ENCODE measurements at regions of chr19 and their contacts with region 1.

Region 1: DNA sequence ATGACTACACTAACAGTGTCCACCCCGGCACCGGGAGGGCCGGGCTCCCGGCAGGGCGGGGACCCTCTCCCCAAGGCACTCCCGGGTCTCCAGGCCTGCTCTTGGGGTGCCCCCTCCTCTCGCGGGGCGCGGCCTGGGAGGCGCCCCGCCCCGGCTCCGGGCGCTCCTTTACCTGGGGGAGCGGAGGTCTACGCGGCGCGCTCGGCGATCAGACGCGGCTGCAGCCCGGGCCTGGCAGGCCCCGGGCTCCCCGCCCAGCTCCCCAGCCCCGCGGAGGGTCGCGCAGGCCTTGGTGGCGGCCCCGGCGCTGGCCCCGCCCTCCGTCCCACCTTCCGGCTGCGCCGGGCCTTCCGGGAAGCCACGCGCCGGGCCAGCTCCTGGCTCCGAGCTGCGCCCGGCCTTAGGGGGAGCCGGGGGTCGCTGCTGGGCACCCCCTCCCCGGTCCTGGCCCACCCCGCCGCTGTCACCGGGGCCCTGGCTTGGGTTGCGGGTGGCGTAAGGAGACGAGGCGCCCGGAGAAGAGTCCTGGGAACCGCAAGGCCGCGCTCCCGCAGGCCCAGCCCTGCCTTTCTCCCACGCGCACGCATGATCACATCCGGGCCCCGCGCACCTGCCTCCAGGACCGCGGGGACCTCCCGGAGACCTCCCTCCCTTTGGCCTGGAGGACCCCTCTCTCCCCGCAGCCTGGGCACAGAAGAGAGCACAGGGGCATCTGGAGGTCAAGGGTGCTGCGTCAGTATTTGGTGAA is at the start of gene C19orf12:
- DNase-seq: peak; percentile 63 to 88 (median 88)
- ATAC-seq: peak; percentile 86 to 89
- H3K4me3 ChIP-seq: peak within 1 kb of the TSS; percentile 98
- H3K27ac ChIP-seq: peak within 1 kb of the TSS; percentile 85
- H3K4me1 ChIP-seq: peaks cover 3% of the 10 kb centered on the region
- H3K27me3 ChIP-seq: no peaks in the 10 kb centered on the region
- total RNA-seq, gene C19orf12: 40.6 to 48.2 (median 43.5) TPM

Region 2: DNA sequence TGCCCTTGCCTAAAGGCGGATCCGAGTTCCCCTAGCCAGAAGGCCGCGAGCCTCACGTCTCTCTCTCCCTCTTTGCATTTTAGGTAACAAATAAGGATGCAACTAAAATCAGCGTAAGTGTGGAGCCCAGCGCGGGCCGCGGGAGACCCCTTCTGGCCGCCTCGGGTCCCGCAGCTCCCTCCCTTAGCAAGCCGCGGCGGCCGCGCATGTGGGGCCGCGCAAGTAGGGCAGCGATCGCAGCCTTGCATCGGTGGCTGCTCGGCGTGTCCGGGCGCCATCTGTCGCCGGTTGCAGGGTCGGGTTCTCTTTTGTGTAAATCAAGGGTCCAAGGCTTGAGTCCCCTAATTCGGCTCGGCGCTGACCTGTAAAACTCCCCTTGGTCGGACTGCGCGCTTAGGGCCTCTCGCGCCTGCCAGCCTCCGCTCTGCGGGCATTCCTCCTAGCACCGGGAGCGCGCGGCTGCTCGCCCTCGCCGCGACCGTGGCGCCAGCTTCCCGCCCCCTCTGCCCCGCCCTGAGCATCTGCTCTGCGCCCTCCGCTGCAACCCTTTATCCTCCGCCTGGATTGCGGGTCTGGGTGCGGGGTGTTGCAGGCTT is 186.7 kb before region 1 on chr19:
- intact Hi-C with region 1: no loop called
- DNase-seq: peak; percentile 56 to 87 (median 81)
- ATAC-seq: peak; percentile 85
- H3K4me3 ChIP-seq: peak overlapping the region; percentile 7
- H3K27ac ChIP-seq: no peak overlapping the region
- H3K4me1 ChIP-seq: peaks cover 3% of the 10 kb centered on the region
- H3K27me3 ChIP-seq: no peaks in the 10 kb centered on the region

Region 3: DNA sequence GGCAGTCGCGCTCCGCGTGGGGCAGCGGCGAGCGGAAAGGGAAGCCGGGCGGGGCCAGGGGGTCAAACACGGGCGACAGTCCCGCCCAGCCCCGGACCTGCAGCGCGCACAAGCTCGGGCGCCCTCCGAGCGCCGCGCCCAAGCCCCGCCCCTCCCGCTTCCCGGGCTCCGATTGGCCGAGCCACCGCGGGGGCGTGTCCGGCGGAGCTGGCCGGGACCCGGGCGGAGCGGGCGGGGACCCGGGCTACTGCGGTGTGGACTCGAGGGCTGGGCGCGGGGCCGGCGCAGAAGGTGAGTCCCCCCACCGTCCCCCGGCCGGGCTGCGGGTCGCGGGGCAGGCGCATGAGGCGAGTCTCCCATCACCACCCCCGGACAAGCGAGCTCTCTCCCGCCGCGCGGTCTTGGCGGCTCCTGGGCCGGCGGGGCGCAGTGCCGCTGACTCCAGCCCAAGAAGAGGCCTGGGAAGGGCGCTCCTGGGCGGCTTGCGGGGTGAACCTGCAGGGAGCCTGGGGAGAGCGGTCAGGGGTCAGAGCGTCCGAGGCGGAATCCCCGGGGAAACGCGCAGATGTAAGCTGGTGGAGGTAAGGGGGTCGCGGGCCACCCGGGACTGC is 49.8 kb before region 1 on chr19 and contains the start of gene PLEKHF1:
- intact Hi-C with region 1: loop called in 2 of 4 experiments (anchors 10 kb)
- DNase-seq: peak; percentile 92 to 98 (median 97)
- ATAC-seq: peak; percentile 88
- H3K4me3 ChIP-seq: peak within 1 kb of the TSS; percentile 77
- H3K27ac ChIP-seq: peak within 1 kb of the TSS; percentile 94
- H3K4me1 ChIP-seq: peaks cover 12% of the 10 kb centered on the region
- H3K27me3 ChIP-seq: no peaks in the 10 kb centered on the region
- total RNA-seq, gene PLEKHF1: 25.1 to 44.1 (median 31.0) TPM

Region 4: DNA sequence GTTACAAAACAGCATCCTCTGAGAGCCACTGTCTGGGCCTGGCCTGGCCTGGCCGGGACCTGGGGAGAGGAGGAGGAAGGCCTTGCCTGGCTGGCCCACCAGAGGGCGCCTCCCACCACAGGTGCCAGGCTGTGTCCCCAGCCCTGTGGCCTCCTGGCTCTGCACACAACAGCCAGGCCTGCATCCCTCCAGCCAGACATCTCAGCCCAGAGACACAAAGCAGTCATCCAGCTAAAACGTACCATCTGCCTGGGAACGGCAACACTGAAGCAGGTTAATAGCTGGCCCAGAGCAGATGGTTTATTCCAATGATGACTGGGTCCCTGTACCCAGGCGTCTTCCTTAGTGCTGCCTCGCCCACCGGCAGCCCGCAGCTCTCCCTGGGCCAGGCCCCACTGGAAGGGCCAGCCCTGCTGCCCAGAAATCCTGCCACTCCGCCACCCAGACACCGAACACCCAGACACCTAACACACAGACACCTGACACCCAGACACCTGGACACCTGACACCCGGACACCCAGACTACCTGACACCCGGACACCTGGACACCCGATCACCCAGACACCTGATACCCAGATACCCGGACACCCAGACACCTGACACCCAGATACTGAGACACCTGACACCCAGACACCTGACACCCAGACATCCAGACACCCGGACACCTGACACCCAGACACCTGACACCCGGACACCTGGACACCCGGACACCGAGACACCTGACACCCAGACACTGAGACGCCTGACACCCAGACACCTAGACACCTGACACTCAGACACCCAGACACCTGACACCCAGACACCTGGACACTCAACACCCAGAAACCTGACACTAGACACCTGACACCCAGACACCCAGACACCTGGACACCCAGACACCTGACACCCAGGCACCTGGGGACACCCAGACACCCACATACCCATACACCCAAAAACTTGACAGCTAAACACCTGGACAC is 20.2 kb before region 1 on chr19:
- intact Hi-C with region 1: loop called in 1 of 4 experiments (anchors 2 kb)
- DNase-seq: peak; percentile 87 to 94 (median 93)
- ATAC-seq: peak; percentile 93 to 97
- H3K4me3 ChIP-seq: no peak overlapping the region
- H3K27ac ChIP-seq: no peak overlapping the region
- H3K4me1 ChIP-seq: peaks cover 2% of the 10 kb centered on the region
- H3K27me3 ChIP-seq: no peaks in the 10 kb centered on the region

Measured in right cardiac atrium (tissue), 5 donors.